ENCODE measurements at regions of chr7 and their contacts with region 1.

Region 1: GRCh38 chr7:110209884-110210283 is 881.0 kb upstream of the LRRN3 start:
- DNase-seq: no peak

Region 2: GRCh38 chr7:110017412-110017811 is 192.5 kb before region 1 on chr7:
- intact Hi-C with region 1: no loop called
- DNase-seq: no peak

Region 3: GRCh38 chr7:110224643-110225042 is 14.8 kb after region 1 on chr7:
- intact Hi-C with region 1: loop called in 1 of 2 experiments (anchors 1 kb)
- DNase-seq: no peak